CD4-positive, alpha-beta memory T cell (primary cell): ENCODE measurements at regions of chr9 and their contacts with region 1.

Region 1: GRCh38 chr9:114405294-114406034 is 17.7 kb upstream of the AKNA start:
- DNase-seq: peak; percentile 76 to 82 (median 80)
- H3K4me3 ChIP-seq: no peak overlapping the region
- H3K4me3 Mint-ChIP-seq: peak overlapping the region in 2 of 8 donors; percentile 17 to 65
- H3K27ac ChIP-seq: no peak overlapping the region
- H3K27ac Mint-ChIP-seq: peak overlapping the region in 4 of 7 donors; percentile 29 to 79 (median 54)
- H3K4me1 ChIP-seq: peaks cover 9% of the 10 kb centered on the region
- H3K4me1 Mint-ChIP-seq: peaks cover 4 to 6% (median 5%) of the 10 kb centered on the region in 4 donors
- H3K27me3 ChIP-seq: no peaks in the 10 kb centered on the region
- H3K27me3 Mint-ChIP-seq: no peaks in the 10 kb centered on the region

Region 2: GRCh38 chr9:114291064-114291474 is 114.4 kb before region 1 on chr9:
- CTCF ChIA-PET with region 1: no interaction called
- POLR2A ChIA-PET with region 1: no interaction called
- intact Hi-C with region 1: no loop called
- DNase-seq: peak in 4 of 5 donors; percentile 53 to 62 (median 58)
- H3K4me3 ChIP-seq: no peak overlapping the region
- H3K4me3 Mint-ChIP-seq: no peak overlapping the region
- H3K27ac ChIP-seq: no peak overlapping the region
- H3K27ac Mint-ChIP-seq: peak overlapping the region in 3 of 7 donors; percentile 8 to 57 (median 49)
- H3K4me1 ChIP-seq: no peaks in the 10 kb centered on the region
- H3K4me1 Mint-ChIP-seq: peaks cover 2 to 6% (median 5%) of the 10 kb centered on the region in 4 donors
- H3K27me3 ChIP-seq: no peaks in the 10 kb centered on the region
- H3K27me3 Mint-ChIP-seq: peaks cover 3 to 7% of the 10 kb centered on the region in 2 donors

Region 3: GRCh38 chr9:114339130-114339908 is 66.1 kb before region 1 on chr9:
- CTCF ChIA-PET with region 1: interaction called, 55 read pairs
- POLR2A ChIA-PET with region 1: interaction called, 1,614 read pairs
- intact Hi-C with region 1: loop called (anchors 1 kb)
- DNase-seq: peak in 4 of 5 donors; percentile 36 to 49 (median 42)
- H3K4me3 ChIP-seq: no peak overlapping the region
- H3K4me3 Mint-ChIP-seq: no peak overlapping the region
- H3K27ac ChIP-seq: no peak overlapping the region
- H3K27ac Mint-ChIP-seq: peak overlapping the region in 6 of 7 donors; percentile 36 to 73 (median 64)
- H3K4me1 ChIP-seq: no peaks in the 10 kb centered on the region
- H3K4me1 Mint-ChIP-seq: peaks cover 8 to 30% (median 14%) of the 10 kb centered on the region in 4 donors
- H3K27me3 ChIP-seq: no peaks in the 10 kb centered on the region
- H3K27me3 Mint-ChIP-seq: no peaks in the 10 kb centered on the region

Region 4: DNA sequence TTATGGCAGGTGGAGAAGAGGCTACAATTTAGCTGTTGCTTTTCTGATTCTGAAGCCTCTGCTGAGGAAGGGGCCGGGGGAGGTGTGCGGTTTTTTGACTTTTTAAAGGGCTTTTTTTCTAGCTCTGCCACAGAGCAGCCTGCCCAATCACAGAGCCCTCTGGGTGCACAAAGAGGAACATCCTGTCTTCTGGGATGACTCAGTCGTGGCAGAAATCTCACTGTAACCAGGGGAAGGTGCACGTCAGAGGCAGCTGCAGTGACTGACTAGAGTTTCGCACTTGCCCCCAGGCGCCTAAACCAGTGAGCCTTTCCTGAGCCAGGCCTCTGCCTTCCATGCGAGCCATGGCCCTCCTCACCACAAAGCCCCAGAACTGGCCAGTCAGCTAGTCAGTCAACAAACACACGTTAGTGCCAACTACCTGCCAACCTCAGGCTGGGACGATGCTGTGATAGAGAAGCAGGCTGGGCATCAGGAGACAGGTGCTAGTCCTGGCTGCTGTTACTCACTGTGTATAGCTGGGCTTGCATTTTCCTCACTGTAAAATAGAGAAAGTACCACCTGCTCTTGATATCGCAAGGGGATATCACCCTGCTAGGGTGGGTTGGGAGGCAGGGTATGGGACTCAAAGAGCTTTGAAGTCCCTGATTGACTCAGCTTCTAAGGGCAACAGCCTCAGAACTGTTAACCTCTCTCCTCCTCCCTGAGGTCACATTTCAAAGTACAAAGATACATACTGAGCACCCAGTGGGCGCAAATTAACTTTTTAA is 19.9 kb before region 1 on chr9:
- CTCF ChIA-PET with region 1: interaction called, 67 read pairs
- POLR2A ChIA-PET with region 1: interaction called, 303 read pairs
- intact Hi-C with region 1: no loop called
- DNase-seq: peak; percentile 91 to 98 (median 93)
- H3K4me3 ChIP-seq: peak overlapping the region; percentile 78 to 99
- H3K4me3 Mint-ChIP-seq: peak overlapping the region; percentile 95 to 100 (median 97)
- H3K27ac ChIP-seq: peak overlapping the region; percentile 88
- H3K27ac Mint-ChIP-seq: peak overlapping the region; percentile 96 to 99 (median 97)
- H3K4me1 ChIP-seq: peaks cover 79% of the 10 kb centered on the region
- H3K4me1 Mint-ChIP-seq: peaks cover 44 to 91% (median 66%) of the 10 kb centered on the region in 4 donors
- H3K27me3 ChIP-seq: no peaks in the 10 kb centered on the region
- H3K27me3 Mint-ChIP-seq: no peaks in the 10 kb centered on the region

Region 5: GRCh38 chr9:114487607-114488300 is 82.3 kb after region 1 on chr9:
- CTCF ChIA-PET with region 1: interaction called, 51 read pairs
- POLR2A ChIA-PET with region 1: no interaction called
- intact Hi-C with region 1: loop called (anchors 1 kb)
- DNase-seq: peak; percentile 66 to 75 (median 70)
- H3K4me3 ChIP-seq: no peak overlapping the region
- H3K4me3 Mint-ChIP-seq: no peak overlapping the region
- H3K27ac ChIP-seq: no peak overlapping the region
- H3K27ac Mint-ChIP-seq: peak overlapping the region in 2 of 7 donors; percentile 24 to 55
- H3K4me1 ChIP-seq: peaks cover 14% of the 10 kb centered on the region
- H3K4me1 Mint-ChIP-seq: peaks cover 12 to 35% (median 19%) of the 10 kb centered on the region in 4 donors
- H3K27me3 ChIP-seq: no peaks in the 10 kb centered on the region
- H3K27me3 Mint-ChIP-seq: peaks cover 0 to 4% of the 10 kb centered on the region in 2 donors

Region 6: DNA sequence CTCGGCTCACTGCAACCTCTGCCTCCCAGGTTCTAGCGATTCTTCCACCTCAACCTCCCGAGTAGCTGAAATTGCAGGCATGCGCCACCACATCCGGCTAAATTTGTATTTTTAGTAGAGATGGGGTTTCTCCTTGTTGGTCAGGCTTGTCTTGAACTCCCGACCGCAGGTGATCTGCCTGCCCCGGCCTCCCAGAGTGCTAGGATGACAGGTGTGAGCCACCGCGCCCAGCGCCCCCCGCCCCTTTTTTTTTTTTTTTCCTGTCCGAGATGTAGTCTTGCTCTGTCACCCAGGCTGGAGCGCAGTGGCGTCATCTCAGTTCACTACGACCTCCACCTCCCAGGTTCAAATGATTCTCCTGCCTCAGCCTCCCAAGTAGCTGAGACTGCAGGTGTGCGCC is 188.7 kb after region 1 on chr9:
- CTCF ChIA-PET with region 1: interaction called, 53 read pairs
- POLR2A ChIA-PET with region 1: interaction called, 18 read pairs
- intact Hi-C with region 1: loop called (anchors 1 kb)
- DNase-seq: no peak
- H3K4me3 ChIP-seq: no peak overlapping the region
- H3K4me3 Mint-ChIP-seq: peak overlapping the region in 1 of 8 donors; percentile 36
- H3K27ac ChIP-seq: no peak overlapping the region
- H3K27ac Mint-ChIP-seq: peak overlapping the region; percentile 31 to 89 (median 85)
- H3K4me1 ChIP-seq: peaks cover 59% of the 10 kb centered on the region
- H3K4me1 Mint-ChIP-seq: peaks cover 44 to 72% (median 55%) of the 10 kb centered on the region in 4 donors
- H3K27me3 ChIP-seq: no peaks in the 10 kb centered on the region
- H3K27me3 Mint-ChIP-seq: no peaks in the 10 kb centered on the region

Region 7: DNA sequence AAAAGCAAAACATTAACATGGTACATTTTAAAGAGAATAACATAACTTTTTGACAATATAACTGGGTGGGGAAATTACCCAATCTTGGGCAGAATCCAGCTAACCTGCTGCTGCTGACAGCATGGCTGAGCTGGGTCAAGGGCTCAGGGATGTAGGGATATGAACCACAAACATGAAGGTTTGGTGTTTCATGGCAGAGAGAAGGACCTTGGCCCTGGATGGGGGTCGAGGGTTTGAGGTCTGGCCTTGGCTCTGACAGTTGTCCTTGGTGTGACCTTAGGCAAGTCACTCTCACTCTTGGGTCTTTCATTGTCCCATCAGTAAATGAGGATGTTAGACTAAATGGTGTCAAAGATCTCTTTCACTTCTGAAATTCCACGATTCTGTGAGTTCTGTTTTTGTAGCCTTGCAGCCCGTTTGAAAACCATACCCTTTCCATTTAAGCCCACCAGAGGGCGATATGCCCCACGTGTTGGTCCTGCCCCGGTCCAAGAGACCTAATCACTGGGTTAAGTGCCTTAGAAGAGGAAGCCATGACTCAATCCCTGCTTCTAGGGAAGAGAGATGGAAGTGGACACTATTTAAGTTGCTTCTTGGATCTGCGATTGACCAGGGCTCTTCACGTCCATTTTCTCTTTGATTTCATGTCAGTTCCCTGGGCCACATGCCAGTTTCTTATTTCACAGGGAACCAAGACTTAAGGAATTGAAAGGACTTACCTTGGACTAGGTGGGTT is 333.3 kb after region 1 on chr9:
- CTCF ChIA-PET with region 1: interaction called, 8 read pairs
- POLR2A ChIA-PET with region 1: no interaction called
- intact Hi-C with region 1: loop called (anchors 2 kb)
- DNase-seq: peak; percentile 73 to 75 (median 74)
- H3K4me3 ChIP-seq: no peak overlapping the region
- H3K4me3 Mint-ChIP-seq: peak overlapping the region in 3 of 8 donors; percentile 16 to 64 (median 36)
- H3K27ac ChIP-seq: no peak overlapping the region
- H3K27ac Mint-ChIP-seq: peak overlapping the region; percentile 67 to 95 (median 91)
- H3K4me1 ChIP-seq: peaks cover 44% of the 10 kb centered on the region
- H3K4me1 Mint-ChIP-seq: peaks cover 34 to 54% (median 43%) of the 10 kb centered on the region in 4 donors
- H3K27me3 ChIP-seq: no peaks in the 10 kb centered on the region
- H3K27me3 Mint-ChIP-seq: no peaks in the 10 kb centered on the region